ENCODE measurements at regions of chr9 and their contacts with region 1.

Region 1: GRCh38 chr9:136160381-136160841 is 41.7 kb upstream of the TMEM250 start:
- DNase-seq: no peak
- ATAC-seq: no peak
- H3K4me3 ChIP-seq: no peak overlapping the region
- H3K27ac ChIP-seq: no peak overlapping the region
- H3K4me1 ChIP-seq: no peaks in the 10 kb centered on the region
- H3K27me3 ChIP-seq: peaks cover 65% of the 10 kb centered on the region
- CTCF ChIP-seq: no peak
- POLR2A ChIP-seq: no peak
- RAD21 ChIP-seq: no peak

Region 2: GRCh38 chr9:136275655-136276429 is 115.4 kb after region 1 on chr9:
- CTCF ChIA-PET with region 1: no interaction called
- POLR2A ChIA-PET with region 1: no interaction called
- dilution Hi-C with region 1: no loop called
- in situ Hi-C with region 1: loop called (anchors 10 kb)
- intact Hi-C with region 1: no loop called
- DNase-seq: no peak
- ATAC-seq: no peak
- H3K4me3 ChIP-seq: no peak overlapping the region
- H3K27ac ChIP-seq: no peak overlapping the region
- H3K4me1 ChIP-seq: no peaks in the 10 kb centered on the region
- H3K27me3 ChIP-seq: peaks cover 57% of the 10 kb centered on the region
- CTCF ChIP-seq: no peak
- POLR2A ChIP-seq: no peak
- RAD21 ChIP-seq: no peak